Endothelial cell of umbilical vein (primary cell): ENCODE measurements at regions of chr1 and their contacts with region 1.

Region 1: DNA sequence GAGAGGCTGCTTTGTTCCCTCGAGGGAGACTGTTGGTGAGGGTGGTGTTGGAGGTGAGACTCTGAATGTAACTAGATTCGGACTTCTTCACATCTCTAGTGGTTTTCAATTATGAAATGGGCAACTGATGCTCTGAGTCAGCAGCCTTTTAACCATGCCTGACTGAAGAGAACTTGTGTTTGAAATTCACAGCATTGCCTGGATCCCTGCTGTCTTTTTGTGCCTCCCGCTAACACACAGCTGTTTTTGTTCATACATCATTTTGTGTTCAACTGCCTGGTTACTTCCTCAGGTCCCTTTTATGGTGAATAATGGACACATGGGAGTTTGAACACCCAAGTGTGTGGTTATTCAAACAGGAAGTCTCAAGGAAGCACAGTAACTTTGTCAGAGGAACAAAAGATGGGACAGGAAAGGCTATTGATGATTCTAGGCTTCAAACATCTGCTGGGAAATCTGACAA is 16.8 kb downstream of the LAMC1 start:
- DNase-seq: peak; percentile 77
- H3K4me3 ChIP-seq: no peak overlapping the region
- H3K27ac ChIP-seq: peak overlapping the region; percentile 59
- H3K4me1 ChIP-seq: peaks cover 29% of the 10 kb centered on the region
- H3K27me3 ChIP-seq: no peaks in the 10 kb centered on the region
- CTCF ChIP-seq: no peak
- POLR2A ChIP-seq: no peak

Region 2: GRCh38 chr1:183003203-183003602 is 36.8 kb before region 1 on chr1:
- CTCF ChIA-PET with region 1: no interaction called
- POLR2A ChIA-PET with region 1: no interaction called
- dilution Hi-C with region 1: no loop called
- intact Hi-C with region 1: loop called (anchors 1 kb)
- DNase-seq: peak; percentile 93
- H3K4me3 ChIP-seq: no peak overlapping the region
- H3K27ac ChIP-seq: peak overlapping the region; percentile 24
- H3K4me1 ChIP-seq: peaks cover 12% of the 10 kb centered on the region
- H3K27me3 ChIP-seq: no peaks in the 10 kb centered on the region
- CTCF ChIP-seq: no peak
- POLR2A ChIP-seq: no peak

Region 3: DNA sequence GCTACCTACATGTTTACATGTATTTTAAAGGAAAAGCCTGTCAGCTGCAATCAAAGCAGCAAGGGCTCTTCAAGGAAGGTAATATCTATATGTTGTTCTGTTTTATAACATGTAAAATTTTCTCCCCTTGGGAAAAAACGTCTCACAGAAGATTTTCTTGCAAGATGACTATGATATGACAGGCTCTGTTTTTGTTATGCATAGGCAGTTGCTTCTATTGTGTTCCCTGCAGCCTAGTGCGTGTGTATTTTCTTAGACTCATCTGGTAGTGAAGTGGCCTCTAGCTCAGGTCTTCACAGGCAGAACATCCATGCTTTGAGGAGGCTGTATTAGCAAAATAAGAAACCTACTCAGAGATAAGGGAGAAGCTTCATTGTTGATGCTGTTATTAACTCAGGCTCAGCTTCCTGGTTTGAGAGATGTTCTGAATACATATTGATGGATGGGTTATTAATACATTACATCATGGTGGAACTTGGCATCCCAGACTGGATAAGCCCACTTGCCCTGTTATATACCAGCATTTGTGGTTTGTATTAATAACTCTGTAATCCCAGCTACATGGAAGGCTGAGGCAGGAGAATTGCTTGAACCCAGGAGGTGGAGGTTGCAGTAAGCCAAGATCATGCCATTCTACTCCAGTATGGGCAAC is 19.0 kb after region 1 on chr1:
- CTCF ChIA-PET with region 1: no interaction called
- POLR2A ChIA-PET with region 1: no interaction called
- dilution Hi-C with region 1: no loop called
- intact Hi-C with region 1: loop called (anchors 2 kb)
- DNase-seq: peak; percentile 50
- H3K4me3 ChIP-seq: no peak overlapping the region
- H3K27ac ChIP-seq: peak overlapping the region; percentile 85
- H3K4me1 ChIP-seq: peaks cover 24% of the 10 kb centered on the region
- H3K27me3 ChIP-seq: no peaks in the 10 kb centered on the region
- CTCF ChIP-seq: no peak
- POLR2A ChIP-seq: no peak

Region 4: GRCh38 chr1:183070923-183071618 is 31.1 kb after region 1 on chr1:
- CTCF ChIA-PET with region 1: interaction called, 8 read pairs
- POLR2A ChIA-PET with region 1: no interaction called
- dilution Hi-C with region 1: no loop called
- intact Hi-C with region 1: loop called (anchors 1 kb)
- DNase-seq: peak; percentile 94
- H3K4me3 ChIP-seq: no peak overlapping the region
- H3K27ac ChIP-seq: peak overlapping the region; percentile 44
- H3K4me1 ChIP-seq: peaks cover 22% of the 10 kb centered on the region
- H3K27me3 ChIP-seq: no peaks in the 10 kb centered on the region
- CTCF ChIP-seq: no peak
- POLR2A ChIP-seq: no peak

Region 5: DNA sequence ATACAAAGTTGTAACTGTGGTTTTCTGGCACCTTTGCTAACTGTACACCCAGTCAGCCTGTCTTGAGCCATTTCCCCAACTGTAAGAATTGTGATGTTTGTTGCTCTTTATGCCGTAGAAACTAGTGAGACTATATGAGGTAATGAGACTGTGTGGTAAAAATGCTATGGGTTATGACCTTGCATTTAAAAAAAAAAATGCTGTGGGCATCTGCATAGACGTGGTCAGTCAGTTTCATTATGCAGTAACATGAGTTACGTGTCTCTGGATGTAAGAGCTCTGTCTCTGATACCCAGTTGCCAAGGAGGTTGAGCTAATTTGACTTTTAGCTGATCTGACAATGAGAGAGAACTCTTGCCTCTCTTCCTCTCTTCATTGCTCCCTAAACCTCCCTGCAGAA is 65.4 kb after region 1 on chr1:
- CTCF ChIA-PET with region 1: no interaction called
- POLR2A ChIA-PET with region 1: no interaction called
- dilution Hi-C with region 1: no loop called
- intact Hi-C with region 1: loop called (anchors 5 kb)
- DNase-seq: no peak
- H3K4me3 ChIP-seq: no peak overlapping the region
- H3K27ac ChIP-seq: no peak overlapping the region
- H3K4me1 ChIP-seq: no peaks in the 10 kb centered on the region
- H3K27me3 ChIP-seq: no peaks in the 10 kb centered on the region
- CTCF ChIP-seq: no peak
- POLR2A ChIP-seq: no peak

Region 6: DNA sequence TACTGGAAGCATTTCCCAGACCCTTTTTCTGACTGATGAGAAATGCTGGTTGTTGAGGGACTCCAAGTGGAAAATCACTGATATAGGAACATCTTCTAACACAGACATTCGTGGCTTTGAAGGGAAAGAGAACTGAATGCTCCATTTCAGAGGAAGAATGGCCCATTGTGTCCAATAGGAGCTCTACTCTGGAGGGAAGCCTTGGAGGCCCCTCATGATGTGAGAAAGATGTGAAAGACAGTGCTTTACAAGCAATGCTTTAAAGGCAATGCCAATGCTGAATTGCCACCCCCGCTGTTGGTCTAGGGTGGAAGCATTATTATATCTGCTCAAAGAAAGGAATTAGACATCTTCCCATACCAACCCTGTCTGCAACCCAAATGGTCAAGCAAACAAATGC is 364.4 kb after region 1 on chr1:
- CTCF ChIA-PET with region 1: no interaction called
- POLR2A ChIA-PET with region 1: no interaction called
- dilution Hi-C with region 1: no loop called
- intact Hi-C with region 1: no loop called
- DNase-seq: no peak
- H3K4me3 ChIP-seq: no peak overlapping the region
- H3K27ac ChIP-seq: no peak overlapping the region
- H3K4me1 ChIP-seq: no peaks in the 10 kb centered on the region
- H3K27me3 ChIP-seq: peaks cover 2 to 5% of the 10 kb centered on the region in 2 experiments
- CTCF ChIP-seq: no peak
- POLR2A ChIP-seq: no peak